Psoas muscle (tissue), 8 donors: ENCODE measurements at regions of chr5 and their contacts with region 1.

Region 1: DNA sequence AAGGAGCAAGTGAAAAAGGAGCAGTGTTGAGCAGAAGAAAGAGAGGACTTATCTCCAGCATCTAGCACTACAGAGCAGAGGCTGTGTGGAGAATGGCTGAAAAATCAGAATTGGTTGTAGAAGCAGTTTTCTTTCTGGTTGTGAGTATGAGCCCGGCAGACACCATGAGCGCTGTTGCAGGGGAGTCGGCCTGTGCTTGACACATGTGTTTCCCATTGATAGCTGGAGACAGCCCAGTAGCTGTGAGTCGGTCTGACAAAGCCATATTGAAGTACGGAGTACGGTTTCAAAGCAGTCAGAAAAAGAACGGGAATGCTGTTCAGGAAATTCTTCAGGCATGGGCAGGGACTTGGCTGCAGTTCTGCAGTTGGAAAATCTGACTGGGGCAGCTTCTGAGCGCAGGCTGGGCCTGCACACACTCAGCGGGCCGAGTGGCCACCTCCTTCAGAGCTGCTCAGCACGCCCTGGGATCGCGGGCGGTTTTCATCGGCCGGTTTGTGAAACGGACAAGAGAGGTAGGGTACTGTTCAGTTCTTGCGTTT is at the start of gene SGCD:
- DNase-seq: peak; percentile 71 to 88
- ATAC-seq: peak; percentile 70 to 78 (median 74)
- H3K4me3 ChIP-seq: peak within 1 kb of the TSS; percentile 69
- H3K27ac ChIP-seq: peak within 1 kb of the TSS; percentile 86
- H3K4me1 ChIP-seq: peaks cover 37% of the 10 kb centered on the region
- H3K27me3 ChIP-seq: no peaks in the 10 kb centered on the region
- CTCF ChIP-seq: no peak
- total RNA-seq, gene SGCD: 28.4 to 51.5 (median 38.9) TPM

Region 2: GRCh38 chr5:155943516-155944407 is 383.0 kb before region 1 on chr5:
- intact Hi-C with region 1: loop called in 1 of 2 experiments (anchors 5 kb)
- DNase-seq: peak; percentile 37 to 73
- ATAC-seq: peak; percentile 81 to 98 (median 92)
- H3K4me3 ChIP-seq: no peak overlapping the region
- H3K27ac ChIP-seq: no peak overlapping the region
- H3K4me1 ChIP-seq: no peaks in the 10 kb centered on the region
- H3K27me3 ChIP-seq: no peaks in the 10 kb centered on the region
- CTCF ChIP-seq: peak; percentile 82

Region 3: DNA sequence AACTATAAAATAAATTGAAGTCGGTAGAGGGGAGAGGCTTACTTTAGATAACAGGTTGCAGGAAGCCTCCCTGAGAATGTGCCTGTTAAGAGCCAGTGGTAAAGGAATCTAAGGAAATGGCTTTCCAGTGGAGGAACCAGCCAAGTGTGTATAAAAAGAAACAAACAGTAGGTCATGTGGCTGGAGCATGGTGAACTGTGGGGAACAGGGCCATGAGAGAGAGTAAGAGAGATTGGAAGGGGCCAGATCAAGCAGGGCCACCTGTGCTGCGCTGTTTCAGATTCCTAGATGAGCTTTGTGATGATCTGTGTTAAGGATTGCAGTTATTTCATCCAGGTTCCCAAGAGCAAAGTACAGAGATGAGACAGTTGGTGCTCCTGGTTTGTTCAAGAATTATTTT is 152.6 kb before region 1 on chr5:
- intact Hi-C with region 1: loop called in 1 of 2 experiments (anchors 5 kb)
- DNase-seq: no peak
- ATAC-seq: peak; percentile 43 to 77 (median 62)
- H3K4me3 ChIP-seq: no peak overlapping the region
- H3K27ac ChIP-seq: peak overlapping the region; percentile 61
- H3K4me1 ChIP-seq: peaks cover 9% of the 10 kb centered on the region
- H3K27me3 ChIP-seq: no peaks in the 10 kb centered on the region
- CTCF ChIP-seq: no peak

Region 4: DNA sequence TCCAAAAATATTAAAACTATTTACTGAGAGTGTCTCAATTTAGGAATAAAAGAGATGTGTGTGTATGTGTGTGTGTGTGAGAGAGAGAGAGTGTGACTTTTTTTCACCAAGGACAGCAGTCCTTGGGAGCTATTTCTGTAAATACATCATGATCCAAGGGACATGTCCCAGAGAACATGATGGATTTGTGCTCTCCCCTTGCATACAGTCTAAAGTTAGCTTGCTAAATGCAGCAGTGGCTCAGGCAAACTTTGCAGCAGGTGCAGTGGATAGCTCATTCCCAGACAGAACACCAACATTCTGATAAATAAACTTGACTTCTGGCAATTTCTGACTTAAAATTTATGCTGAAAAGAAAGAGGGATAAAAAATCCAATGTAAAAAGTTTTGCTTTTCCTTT is 55.2 kb before region 1 on chr5:
- intact Hi-C with region 1: loop called (anchors 5 to 10 kb)
- DNase-seq: no peak
- ATAC-seq: peak; percentile 93 to 99 (median 98)
- H3K4me3 ChIP-seq: no peak overlapping the region
- H3K27ac ChIP-seq: peak overlapping the region; percentile 65
- H3K4me1 ChIP-seq: peaks cover 23% of the 10 kb centered on the region
- H3K27me3 ChIP-seq: no peaks in the 10 kb centered on the region
- CTCF ChIP-seq: no peak